Transverse colon (tissue), 4 donors: ENCODE measurements at regions of chr22 and their contacts with region 1.

Region 1: GRCh38 chr22:30262917-30263741 is 3.5 kb downstream of the OSM start:
- DNase-seq: peak; percentile 81
- H3K4me3 ChIP-seq: peak overlapping the region in 1 of 4 donors; percentile 38
- H3K27ac ChIP-seq: no peak overlapping the region
- H3K4me1 ChIP-seq: peaks cover 0 to 17% (median 4%) of the 10 kb centered on the region in 4 donors
- H3K27me3 ChIP-seq: no peaks in the 10 kb centered on the region
- CTCF ChIP-seq: peak; percentile 97 to 100 (median 99)
- EP300 ChIP-seq: no peak
- POLR2A ChIP-seq: no peak

Region 2: GRCh38 chr22:30104501-30105156 is 158.5 kb before region 1 on chr22:
- in situ Hi-C with region 1: loop called in 2 of 4 experiments (anchors 10 kb)
- intact Hi-C with region 1: no loop called
- DNase-seq: no peak
- H3K4me3 ChIP-seq: no peak overlapping the region
- H3K27ac ChIP-seq: no peak overlapping the region
- H3K4me1 ChIP-seq: peaks cover 0 to 3% (median 0%) of the 10 kb centered on the region in 4 donors
- H3K27me3 ChIP-seq: peaks cover 5% of the 10 kb centered on the region
- CTCF ChIP-seq: no peak
- EP300 ChIP-seq: no peak
- POLR2A ChIP-seq: no peak

Region 3: GRCh38 chr22:30356449-30357235 is 93.5 kb after region 1 on chr22 and contains the starts of genes CCDC157 and SF3A1:
- in situ Hi-C with region 1: no loop called
- intact Hi-C with region 1: loop called (anchors 10 kb)
- DNase-seq: peak; percentile 90
- H3K4me3 ChIP-seq: peak within 1 kb of the TSS; percentile 55 to 84 (median 70)
- H3K27ac ChIP-seq: peak within 1 kb of the TSS; percentile 94 to 96 (median 95)
- H3K4me1 ChIP-seq: peaks cover 15 to 34% (median 25%) of the 10 kb centered on the region in 4 donors
- H3K27me3 ChIP-seq: no peaks in the 10 kb centered on the region
- CTCF ChIP-seq: peak in 1 of 5 experiments; percentile 27
- EP300 ChIP-seq: no peak
- POLR2A ChIP-seq: peak; percentile 88
- total RNA-seq, gene CCDC157: 1.4 to 5.2 (median 3.3) TPM
- total RNA-seq, gene SF3A1: 73.2 to 664 (median 99.3) TPM

Region 4: DNA sequence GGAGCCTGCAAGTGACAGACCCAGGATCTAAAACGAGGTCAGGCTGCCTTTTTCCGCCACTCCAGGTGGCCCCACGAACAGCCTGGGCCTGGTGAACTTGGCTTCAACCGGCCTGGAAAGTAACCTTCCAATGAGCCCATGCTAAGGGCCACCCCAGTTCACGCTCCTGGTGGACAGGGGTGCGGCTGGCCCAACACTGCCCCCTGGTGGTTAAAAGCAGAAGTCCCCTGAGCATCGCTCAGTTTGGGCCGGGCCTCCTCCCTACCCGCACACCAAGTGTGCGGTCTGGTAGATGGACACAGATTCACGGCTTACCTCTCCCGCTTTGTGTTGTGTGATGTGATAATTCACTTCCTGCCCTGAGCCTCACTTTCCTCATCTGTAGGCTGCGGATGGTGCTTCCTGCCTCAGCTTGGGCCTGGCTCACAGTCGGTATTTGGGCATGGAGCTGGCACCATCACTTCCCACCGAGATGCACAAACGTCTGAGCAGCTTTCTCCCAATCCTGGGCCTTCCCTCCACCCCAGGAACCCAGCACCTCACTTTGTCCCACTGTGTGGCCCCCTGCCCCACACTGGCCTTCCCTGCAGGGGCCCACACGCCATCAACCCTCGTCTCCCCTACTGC is 222.3 kb after region 1 on chr22:
- in situ Hi-C with region 1: no loop called
- intact Hi-C with region 1: loop called (anchors 5 kb)
- DNase-seq: peak; percentile 72
- H3K4me3 ChIP-seq: no peak overlapping the region
- H3K27ac ChIP-seq: no peak overlapping the region
- H3K4me1 ChIP-seq: no peaks in the 10 kb centered on the region
- H3K27me3 ChIP-seq: no peaks in the 10 kb centered on the region
- CTCF ChIP-seq: peak; percentile 95 to 98 (median 95)
- EP300 ChIP-seq: no peak
- POLR2A ChIP-seq: no peak